Dendritic cell treated with granulocyte-macrophage colony-stimulating factor and Interleukin-4, amounts not matched to agents 40 ng/mL and 50 ng/mL, for 4 days (primary cell): ENCODE measurements at regions of chr13 and their contacts with region 1.

Region 1: DNA sequence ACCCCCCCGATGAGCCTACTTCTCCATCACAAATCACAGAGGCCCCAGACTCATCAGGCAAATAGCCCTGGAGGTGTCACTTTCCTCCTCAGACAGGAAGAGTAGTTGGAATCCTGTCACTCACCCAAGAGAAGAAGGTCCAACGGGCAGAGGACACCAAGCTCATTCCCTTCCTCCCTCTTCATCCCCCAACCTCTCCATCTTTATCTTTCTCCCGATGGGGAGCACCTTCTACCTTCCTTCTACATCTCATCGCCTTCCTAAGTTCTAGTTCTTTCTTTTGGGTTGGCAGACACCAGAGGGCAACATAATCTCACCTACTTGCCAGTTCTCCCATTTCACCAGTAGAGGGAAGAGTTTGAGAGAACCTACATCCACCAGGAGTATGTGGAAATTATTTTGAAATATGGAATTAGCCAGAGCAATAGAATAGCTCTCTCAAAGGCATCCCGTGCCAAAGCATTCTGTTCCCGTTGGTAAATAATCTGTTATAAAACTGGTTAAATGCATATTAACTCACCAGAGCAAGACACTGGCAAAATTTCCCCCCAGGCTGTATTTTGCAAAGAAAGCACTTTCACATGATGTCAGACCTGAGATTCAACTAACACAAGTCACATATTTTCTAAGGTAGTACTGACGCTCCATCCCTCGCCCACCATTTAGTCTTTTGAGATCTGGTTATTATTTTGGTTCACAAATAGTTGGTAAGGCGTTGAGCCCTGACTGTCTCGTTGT is 55.0 kb downstream of the ZIC5 start:
- H3K4me3 Mint-ChIP-seq: no peak overlapping the region
- H3K27ac Mint-ChIP-seq: no peak overlapping the region
- H3K4me1 Mint-ChIP-seq: no peaks in the 10 kb centered on the region
- H3K27me3 Mint-ChIP-seq: peaks cover 43% of the 10 kb centered on the region

Region 2: DNA sequence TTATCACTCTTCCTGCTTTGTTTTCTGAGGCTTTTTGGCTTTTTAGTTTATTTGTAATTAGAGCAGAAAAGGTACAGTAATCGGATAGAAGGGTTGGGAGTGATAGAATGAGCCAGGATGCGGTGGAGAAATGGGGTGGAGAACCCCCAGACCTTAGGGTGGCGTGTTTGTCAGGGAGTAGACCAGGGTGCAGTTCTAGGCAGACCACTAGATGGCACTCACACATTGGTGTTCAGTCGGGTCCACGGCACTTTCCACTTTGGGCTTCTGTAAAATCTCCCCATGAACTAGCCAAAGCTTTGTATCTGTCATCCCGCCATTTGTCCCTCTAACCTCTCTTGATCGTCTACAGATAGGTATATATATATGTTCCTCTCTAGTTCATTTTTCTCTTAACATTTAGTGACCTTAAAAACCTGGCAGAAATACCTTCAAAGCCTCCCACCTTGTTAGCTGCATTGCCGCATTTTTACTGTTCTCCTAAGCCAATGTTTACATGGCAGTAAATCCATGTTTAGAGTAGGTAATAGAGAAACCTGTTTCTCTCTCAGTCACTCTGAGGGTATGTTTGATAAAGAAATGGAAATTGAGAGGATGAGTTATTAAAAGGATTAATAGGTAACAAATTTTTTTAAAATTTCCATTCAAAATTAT is 260.3 kb before region 1 on chr13:
- intact Hi-C with region 1: loop called (anchors 2 kb)
- H3K4me3 Mint-ChIP-seq: no peak overlapping the region
- H3K27ac Mint-ChIP-seq: no peak overlapping the region
- H3K4me1 Mint-ChIP-seq: peaks cover 22% of the 10 kb centered on the region
- H3K27me3 Mint-ChIP-seq: peaks cover 48% of the 10 kb centered on the region

Region 3: DNA sequence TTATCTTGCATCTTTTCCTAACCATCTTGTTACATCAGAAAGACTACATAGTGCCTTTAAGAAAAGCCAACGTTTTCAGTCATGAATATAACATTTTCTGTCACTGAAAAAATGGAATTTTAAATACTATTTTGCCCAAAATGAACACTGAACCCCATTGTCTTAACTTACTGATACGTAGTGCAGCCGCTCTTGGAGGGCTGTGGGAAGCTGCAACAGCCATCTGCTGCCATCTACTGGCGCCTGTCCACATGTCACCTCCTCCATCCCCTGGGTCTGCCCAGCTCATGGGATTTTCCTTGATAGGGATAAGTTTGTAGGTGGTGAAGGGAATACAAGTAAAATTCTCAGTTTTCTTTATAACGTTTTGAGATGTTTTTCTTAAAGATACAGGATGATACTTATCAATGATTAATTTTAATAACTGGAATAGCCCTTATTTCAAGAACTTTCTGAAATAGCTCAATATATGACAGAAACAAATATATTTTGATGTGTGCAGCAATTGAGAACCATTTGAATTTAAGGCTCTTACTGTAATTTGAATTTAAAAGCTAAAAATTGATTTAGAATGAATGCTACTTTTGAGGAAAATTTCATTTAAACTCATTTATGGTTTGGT is 598.4 kb after region 1 on chr13:
- intact Hi-C with region 1: loop called (anchors 1 kb)
- H3K4me3 Mint-ChIP-seq: no peak overlapping the region
- H3K27ac Mint-ChIP-seq: no peak overlapping the region
- H3K4me1 Mint-ChIP-seq: peaks cover 21% of the 10 kb centered on the region
- H3K27me3 Mint-ChIP-seq: peaks cover 19% of the 10 kb centered on the region